Aorta (tissue), 5 donors: ENCODE measurements at regions of chr3 and their contacts with region 1.

Region 1: GRCh38 chr3:126982471-126983175 is at the start of gene PLXNA1:
- DNase-seq: peak; percentile 90 to 94
- ATAC-seq: peak; percentile 93
- H3K4me3 ChIP-seq: peak within 1 kb of the TSS; percentile 72 to 86
- H3K27ac ChIP-seq: peak within 1 kb of the TSS in 1 of 2 donors; percentile 71
- H3K4me1 ChIP-seq: no peaks in the 10 kb centered on the region
- H3K27me3 ChIP-seq: no peaks in the 10 kb centered on the region
- total RNA-seq, gene PLXNA1: 28.7 to 51.3 TPM

Region 2: GRCh38 chr3:126752303-126752842 is 230.2 kb before region 1 on chr3:
- intact Hi-C with region 1: loop called (anchors 5 kb)
- DNase-seq: peak; percentile 85 to 92
- ATAC-seq: peak; percentile 84
- H3K4me3 ChIP-seq: no peak overlapping the region
- H3K27ac ChIP-seq: no peak overlapping the region
- H3K4me1 ChIP-seq: no peaks in the 10 kb centered on the region
- H3K27me3 ChIP-seq: no peaks in the 10 kb centered on the region

Region 3: DNA sequence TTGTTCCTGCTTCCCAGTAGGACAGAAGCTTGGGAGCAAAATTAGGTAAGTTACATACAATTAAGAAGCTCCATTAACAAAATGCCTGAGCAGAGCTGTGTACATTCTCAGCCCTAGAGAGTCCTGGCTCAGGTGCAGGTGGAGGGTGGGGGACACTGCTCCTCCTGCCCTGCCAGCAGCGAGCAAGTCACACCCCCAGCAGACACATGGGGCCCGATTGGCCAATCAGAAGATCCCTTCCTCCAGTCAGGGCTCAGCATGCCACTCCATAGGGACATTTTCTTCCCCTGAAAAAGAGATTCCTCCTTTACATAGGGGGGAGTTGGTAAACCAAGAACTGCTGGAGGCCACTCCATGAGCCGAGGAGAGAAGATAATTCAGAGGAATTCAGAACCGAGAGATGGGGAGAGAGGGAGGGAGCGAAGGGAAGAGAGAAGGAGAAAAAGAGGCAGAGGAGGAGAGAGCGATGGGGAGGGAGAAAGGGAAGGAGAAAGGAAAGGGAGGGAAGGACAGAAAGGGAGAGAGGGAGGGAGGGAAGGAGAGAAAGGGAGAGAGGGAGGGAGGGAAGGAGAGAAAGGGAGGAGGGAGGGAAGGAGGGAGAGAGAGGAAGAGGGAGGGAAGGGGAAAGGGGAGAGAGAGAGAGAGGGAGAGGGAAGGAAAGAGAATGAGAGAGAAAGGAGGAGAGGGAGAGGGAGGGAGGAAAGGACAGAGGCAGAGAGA is 62.5 kb after region 1 on chr3:
- intact Hi-C with region 1: loop called in 1 of 2 experiments (anchors 5 kb)
- DNase-seq: peak; percentile 53 to 68
- ATAC-seq: no peak
- H3K4me3 ChIP-seq: no peak overlapping the region
- H3K27ac ChIP-seq: peak overlapping the region; percentile 22 to 78
- H3K4me1 ChIP-seq: peaks cover 0 to 4% of the 10 kb centered on the region in 2 donors
- H3K27me3 ChIP-seq: no peaks in the 10 kb centered on the region

Region 4: GRCh38 chr3:127172781-127173515 is 190.3 kb after region 1 on chr3:
- intact Hi-C with region 1: loop called in 1 of 2 experiments (anchors 5 kb)
- DNase-seq: peak in 1 of 2 donors; percentile 84
- ATAC-seq: peak; percentile 54
- H3K4me3 ChIP-seq: no peak overlapping the region
- H3K27ac ChIP-seq: no peak overlapping the region
- H3K4me1 ChIP-seq: peaks cover 0 to 3% of the 10 kb centered on the region in 2 donors
- H3K27me3 ChIP-seq: no peaks in the 10 kb centered on the region

Region 5: DNA sequence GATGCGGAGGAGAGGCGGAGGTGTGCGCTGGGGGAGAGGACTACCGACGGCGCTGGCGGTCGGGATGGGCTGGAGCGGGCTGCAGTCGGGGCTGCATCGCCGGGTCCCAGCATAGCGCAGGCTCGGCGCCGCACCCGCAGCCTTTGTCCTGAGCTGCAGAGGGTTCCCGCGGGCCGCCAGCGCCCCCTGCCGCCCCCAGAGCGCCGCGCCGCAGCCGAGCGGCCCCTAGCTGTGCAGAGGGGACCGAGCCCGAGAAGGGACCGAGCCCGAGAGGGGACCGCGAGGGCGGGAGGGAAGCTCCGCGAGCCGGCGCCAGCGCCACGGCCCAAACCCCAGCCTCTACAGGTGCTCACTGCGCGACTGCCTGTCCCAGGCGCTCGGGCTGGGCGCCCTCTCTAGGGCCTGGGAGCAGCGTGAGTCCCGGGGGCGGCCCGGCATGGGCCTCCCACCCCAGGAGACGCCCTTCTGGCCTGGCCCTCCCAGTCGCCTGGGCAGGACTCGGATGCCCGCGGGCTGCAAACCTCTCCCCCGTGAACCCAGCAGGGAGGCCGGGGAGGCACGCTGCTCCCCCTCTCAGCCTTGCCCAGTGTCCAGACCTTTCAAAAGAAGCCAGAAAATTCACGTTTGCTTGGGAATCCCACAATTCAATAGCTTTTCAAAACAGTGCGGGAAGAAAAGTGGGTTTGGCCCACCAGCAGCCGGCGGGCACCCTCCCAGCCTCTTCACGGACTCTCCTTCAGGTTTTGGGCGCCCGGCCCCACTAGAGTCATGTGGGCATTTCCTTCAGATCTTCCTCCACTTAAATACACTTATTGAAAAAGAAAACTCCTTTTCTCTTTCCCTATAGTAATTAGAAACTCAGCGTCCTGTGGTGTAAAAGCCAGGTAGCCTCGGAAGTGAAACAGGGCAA is 473.2 kb after region 1 on chr3:
- intact Hi-C with region 1: loop called in 1 of 2 experiments (anchors 5 kb)
- DNase-seq: peak; percentile 73 to 92
- ATAC-seq: peak; percentile 89
- H3K4me3 ChIP-seq: no peak overlapping the region
- H3K27ac ChIP-seq: no peak overlapping the region
- H3K4me1 ChIP-seq: no peaks in the 10 kb centered on the region
- H3K27me3 ChIP-seq: no peaks in the 10 kb centered on the region

Region 6: GRCh38 chr3:127544192-127544802 is 561.7 kb after region 1 on chr3:
- intact Hi-C with region 1: loop called in 1 of 2 experiments (anchors 2 kb)
- DNase-seq: peak; percentile 82 to 88
- ATAC-seq: peak; percentile 30
- H3K4me3 ChIP-seq: no peak overlapping the region
- H3K27ac ChIP-seq: no peak overlapping the region
- H3K4me1 ChIP-seq: no peaks in the 10 kb centered on the region
- H3K27me3 ChIP-seq: no peaks in the 10 kb centered on the region